ENCODE measurements at regions of chr5 and their contacts with region 1.

Region 1: DNA sequence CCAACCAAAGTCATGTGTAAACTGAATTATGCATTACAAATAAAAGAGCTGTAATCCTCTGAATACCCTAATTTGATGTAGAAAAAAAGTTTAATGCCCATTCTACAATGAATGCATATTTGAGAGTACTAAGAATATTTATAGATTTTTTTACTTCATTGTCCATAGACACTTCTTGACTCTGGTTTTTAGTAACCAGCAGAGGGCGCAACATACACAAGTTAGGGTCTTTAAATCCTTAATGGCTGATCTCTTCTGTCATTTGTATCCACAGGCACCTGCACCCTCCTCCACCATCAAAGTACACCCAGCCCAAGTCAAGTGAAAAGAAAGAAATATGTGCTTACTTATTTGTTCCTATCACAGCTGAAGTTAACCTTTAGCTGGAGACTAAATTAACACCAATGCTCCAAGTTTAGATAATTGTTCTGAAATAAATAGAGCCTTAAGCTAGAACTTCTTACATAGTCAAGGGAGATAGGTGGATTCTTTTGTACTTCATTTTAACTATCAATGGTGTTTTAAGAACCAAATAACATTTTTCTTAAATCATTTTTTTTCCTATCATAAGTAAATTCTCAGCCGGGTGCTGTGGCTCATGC is 524.2 kb upstream of the DAB2 start:
- DNase-seq: no peak
- ATAC-seq: peak; percentile 83
- H3K4me3 Mint-ChIP-seq: no peak overlapping the region
- H3K27ac Mint-ChIP-seq: no peak overlapping the region
- H3K4me1 Mint-ChIP-seq: peaks cover 3% of the 10 kb centered on the region
- H3K27me3 Mint-ChIP-seq: no peaks in the 10 kb centered on the region
- CTCF ChIP-seq: no peak

Region 2: GRCh38 chr5:39599721-39600431 is 349.1 kb before region 1 on chr5:
- CTCF ChIA-PET with region 1: no interaction called
- POLR2A ChIA-PET with region 1: no interaction called
- intact Hi-C with region 1: loop called (anchors 10 kb)
- DNase-seq: no peak
- ATAC-seq: no peak
- H3K4me3 Mint-ChIP-seq: no peak overlapping the region
- H3K27ac Mint-ChIP-seq: no peak overlapping the region
- H3K4me1 Mint-ChIP-seq: no peaks in the 10 kb centered on the region
- H3K27me3 Mint-ChIP-seq: peaks cover 18% of the 10 kb centered on the region
- CTCF ChIP-seq: no peak

Region 3: DNA sequence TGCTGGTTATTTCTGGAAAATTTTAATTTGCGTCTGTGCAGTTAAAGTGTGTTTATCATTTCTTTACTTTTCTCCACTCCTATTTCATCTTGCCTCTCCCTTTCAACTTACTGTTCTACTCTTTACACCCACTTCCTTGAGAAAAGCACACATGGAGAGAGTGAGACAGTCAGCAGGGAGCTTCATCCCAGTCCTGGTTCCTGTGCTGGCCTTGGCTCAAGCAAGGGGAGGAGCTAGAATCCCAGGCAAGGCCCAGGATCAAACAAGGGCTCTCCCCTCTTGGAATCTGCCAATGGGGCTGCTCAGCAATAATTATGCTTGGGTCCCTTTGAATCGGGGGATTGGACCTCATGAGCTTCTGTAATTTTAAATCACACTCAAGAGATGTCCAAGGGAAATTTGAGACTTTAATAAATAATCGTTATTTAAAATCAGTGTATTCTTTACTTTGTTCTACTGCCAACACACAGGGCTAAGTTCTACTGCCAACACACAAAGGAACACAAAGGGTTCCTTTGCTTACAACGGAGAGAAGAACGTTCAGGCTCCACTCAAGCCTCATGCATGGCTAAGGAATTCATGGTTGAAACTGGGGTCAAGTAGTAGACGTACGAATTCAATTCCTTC is 84.9 kb before region 1 on chr5:
- CTCF ChIA-PET with region 1: no interaction called
- POLR2A ChIA-PET with region 1: no interaction called
- intact Hi-C with region 1: no loop called
- DNase-seq: no peak
- ATAC-seq: no peak
- H3K4me3 Mint-ChIP-seq: no peak overlapping the region
- H3K27ac Mint-ChIP-seq: no peak overlapping the region
- H3K4me1 Mint-ChIP-seq: no peaks in the 10 kb centered on the region
- H3K27me3 Mint-ChIP-seq: no peaks in the 10 kb centered on the region
- CTCF ChIP-seq: no peak

Region 4: GRCh38 chr5:40165794-40166728 is 217.1 kb after region 1 on chr5:
- CTCF ChIA-PET with region 1: no interaction called
- POLR2A ChIA-PET with region 1: no interaction called
- intact Hi-C with region 1: loop called (anchors 1 kb)
- DNase-seq: no peak
- ATAC-seq: no peak
- H3K4me3 Mint-ChIP-seq: no peak overlapping the region
- H3K27ac Mint-ChIP-seq: no peak overlapping the region
- H3K4me1 Mint-ChIP-seq: no peaks in the 10 kb centered on the region
- H3K27me3 Mint-ChIP-seq: no peaks in the 10 kb centered on the region
- CTCF ChIP-seq: no peak

Region 5: DNA sequence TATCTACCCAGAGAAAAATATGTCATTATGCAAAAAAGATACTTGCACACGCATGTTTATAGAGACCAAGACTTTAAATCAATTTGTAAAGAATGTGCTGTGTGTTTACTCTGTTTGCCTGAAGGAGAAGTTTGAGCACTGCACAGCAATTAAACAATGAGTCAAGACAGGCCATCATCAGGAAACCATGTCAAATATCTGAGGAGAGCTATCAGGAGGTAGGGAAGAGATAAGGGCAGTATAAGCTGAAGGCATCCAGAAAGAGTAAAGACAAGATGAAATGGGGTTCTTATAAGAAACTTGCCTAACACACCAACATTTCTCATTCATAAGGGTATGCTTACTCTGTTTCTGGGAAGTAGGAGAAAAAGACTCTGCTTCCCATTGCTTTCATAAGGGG is 325.0 kb after region 1 on chr5:
- CTCF ChIA-PET with region 1: no interaction called
- POLR2A ChIA-PET with region 1: no interaction called
- intact Hi-C with region 1: no loop called
- DNase-seq: no peak
- ATAC-seq: no peak
- H3K4me3 Mint-ChIP-seq: no peak overlapping the region
- H3K27ac Mint-ChIP-seq: no peak overlapping the region
- H3K4me1 Mint-ChIP-seq: peaks cover 30% of the 10 kb centered on the region
- H3K27me3 Mint-ChIP-seq: no peaks in the 10 kb centered on the region
- CTCF ChIP-seq: no peak

Region 6: DNA sequence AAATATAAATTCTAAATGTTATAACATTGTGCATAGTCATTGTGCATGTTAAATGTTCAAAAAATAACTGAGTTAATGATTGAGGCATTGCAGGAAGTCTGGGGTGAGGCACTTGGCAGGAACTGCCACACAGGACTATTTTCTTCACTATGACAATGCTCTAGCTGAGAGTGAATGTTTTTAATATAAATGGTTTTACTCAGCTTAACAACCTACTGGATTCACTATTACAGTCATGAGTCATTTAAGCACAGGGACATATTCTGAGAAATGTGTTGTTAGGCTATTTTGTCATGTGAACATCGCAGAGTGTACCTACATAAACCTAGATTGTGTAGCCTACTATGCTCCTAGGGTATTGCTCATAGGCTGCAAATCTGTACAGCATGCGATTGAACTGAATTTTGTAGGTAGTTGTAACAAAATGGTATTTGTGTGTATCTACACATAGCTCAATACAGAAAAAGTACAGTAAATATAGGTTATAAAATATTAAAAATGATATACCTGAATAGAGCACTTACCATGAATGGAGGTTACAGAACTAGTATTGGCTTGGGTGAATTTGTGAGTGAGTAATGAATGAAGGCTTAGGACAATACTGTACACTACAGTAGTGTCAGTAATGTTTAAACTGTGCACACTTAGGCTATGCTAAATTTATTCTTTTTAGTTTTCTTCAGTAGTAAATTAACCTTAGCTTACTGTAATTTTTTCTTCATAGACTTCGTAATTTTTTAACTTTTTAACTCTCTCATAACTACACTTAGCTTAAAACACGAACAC is 384.7 kb after region 1 on chr5:
- CTCF ChIA-PET with region 1: no interaction called
- POLR2A ChIA-PET with region 1: no interaction called
- intact Hi-C with region 1: no loop called
- DNase-seq: no peak
- ATAC-seq: no peak
- H3K4me3 Mint-ChIP-seq: no peak overlapping the region
- H3K27ac Mint-ChIP-seq: no peak overlapping the region
- H3K4me1 Mint-ChIP-seq: no peaks in the 10 kb centered on the region
- H3K27me3 Mint-ChIP-seq: no peaks in the 10 kb centered on the region
- CTCF ChIP-seq: no peak

Region 7: DNA sequence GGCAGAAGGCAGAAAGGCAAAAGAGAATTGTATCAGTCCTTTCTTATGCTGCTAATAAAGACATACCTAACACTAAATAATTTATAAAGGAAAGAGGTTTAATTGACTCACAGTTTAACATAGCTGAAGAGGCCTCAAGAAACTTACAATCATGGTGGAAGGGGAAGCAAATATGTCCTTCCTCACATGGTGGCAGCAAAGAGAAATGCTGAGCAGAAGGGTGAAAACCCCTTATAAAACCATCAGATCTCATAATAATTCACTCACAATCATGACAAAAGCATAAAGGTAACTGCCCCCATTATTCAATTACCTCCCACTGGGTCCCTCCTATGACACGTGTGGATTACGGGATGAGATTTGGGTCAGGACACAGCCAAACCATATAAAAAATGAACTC is 418.3 kb after region 1 on chr5:
- CTCF ChIA-PET with region 1: interaction called, 6 read pairs
- POLR2A ChIA-PET with region 1: no interaction called
- intact Hi-C with region 1: loop called (anchors 2 kb)
- DNase-seq: no peak
- ATAC-seq: peak; percentile 45
- H3K4me3 Mint-ChIP-seq: no peak overlapping the region
- H3K27ac Mint-ChIP-seq: no peak overlapping the region
- H3K4me1 Mint-ChIP-seq: peaks cover 13% of the 10 kb centered on the region
- H3K27me3 Mint-ChIP-seq: no peaks in the 10 kb centered on the region
- CTCF ChIP-seq: no peak

Region 8: GRCh38 chr5:40879163-40879942 is 930.4 kb after region 1 on chr5:
- CTCF ChIA-PET with region 1: no interaction called
- POLR2A ChIA-PET with region 1: no interaction called
- intact Hi-C with region 1: loop called (anchors 5 kb)
- DNase-seq: no peak
- ATAC-seq: peak; percentile 28
- H3K4me3 Mint-ChIP-seq: no peak overlapping the region
- H3K27ac Mint-ChIP-seq: no peak overlapping the region
- H3K4me1 Mint-ChIP-seq: no peaks in the 10 kb centered on the region
- H3K27me3 Mint-ChIP-seq: no peaks in the 10 kb centered on the region
- CTCF ChIP-seq: peak; percentile 20

Measured in activated B cell treated with CpG ODN at 0.5 μM for 24 hours (primary cell).